ENCODE measurements at regions of chr3 and their contacts with region 1.

Region 1: DNA sequence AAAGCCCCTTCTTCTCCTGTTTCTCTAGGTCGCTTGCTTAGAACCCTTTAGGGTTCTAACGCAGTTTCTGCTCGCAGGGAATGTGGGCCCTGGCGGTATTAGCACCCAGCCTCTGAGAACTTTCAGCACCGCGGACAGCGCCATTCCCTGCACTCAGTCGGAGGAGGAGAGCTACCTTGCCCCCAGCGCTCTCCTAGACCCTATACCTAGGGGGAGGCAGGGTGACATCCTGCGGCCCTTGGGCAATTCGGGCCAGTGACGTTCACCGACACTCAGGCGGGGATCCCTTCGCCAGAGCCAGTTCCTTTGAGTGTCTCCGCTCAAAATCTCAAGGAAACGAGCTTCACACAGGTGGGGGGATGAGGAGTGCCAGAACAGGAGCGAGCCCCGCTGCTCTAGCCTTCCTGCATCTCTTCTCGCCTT is 1.3 kb downstream of the SLC7A14 start:
- DNase-seq: peak; percentile 42
- H3K4me3 ChIP-seq: peak overlapping the region; percentile 61 to 64
- H3K27ac ChIP-seq: no peak overlapping the region
- H3K4me1 ChIP-seq: peaks cover 0 to 11% of the 10 kb centered on the region in 2 experiments; a peak in 2 of 4 replicates
- H3K27me3 ChIP-seq: no peaks in the 10 kb centered on the region
- CTCF ChIP-seq: no peak
- EP300 ChIP-seq: no peak
- RAD21 ChIP-seq: no peak

Region 2: DNA sequence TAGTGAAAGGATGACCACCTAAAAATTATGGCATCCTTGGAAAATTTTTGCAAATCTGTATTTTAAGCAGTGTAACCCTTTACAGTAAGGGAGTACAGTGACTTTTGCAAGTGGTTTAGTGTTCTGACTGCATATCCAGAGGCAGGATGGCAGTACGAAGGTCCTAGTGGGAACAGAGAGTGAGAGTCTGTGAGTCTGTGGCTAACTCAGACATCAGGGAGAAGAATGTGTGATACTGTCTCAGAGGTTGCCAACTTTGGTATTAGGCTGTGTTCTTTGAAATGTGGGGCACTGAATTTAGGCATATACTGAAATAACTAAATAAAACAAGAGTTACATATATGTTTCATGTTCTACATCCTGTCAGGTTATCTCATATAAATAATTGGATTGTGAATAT is 336.7 kb before region 1 on chr3:
- CTCF ChIA-PET with region 1: no interaction called
- POLR2A ChIA-PET with region 1: no interaction called
- DNase-seq: no peak
- H3K4me3 ChIP-seq: no peak overlapping the region
- H3K27ac ChIP-seq: no peak overlapping the region
- H3K4me1 ChIP-seq: no peaks in the 10 kb centered on the region
- H3K27me3 ChIP-seq: no peaks in the 10 kb centered on the region
- CTCF ChIP-seq: no peak
- EP300 ChIP-seq: no peak
- RAD21 ChIP-seq: no peak

Region 3: GRCh38 chr3:170572665-170573253 is 11.8 kb before region 1 on chr3:
- CTCF ChIA-PET with region 1: interaction called, 10 read pairs
- POLR2A ChIA-PET with region 1: interaction called, 3 read pairs
- DNase-seq: no peak
- H3K4me3 ChIP-seq: no peak overlapping the region
- H3K27ac ChIP-seq: peak overlapping the region; percentile 11 to 65; a peak in 3 of 4 replicates
- H3K4me1 ChIP-seq: peaks cover 0 to 4% of the 10 kb centered on the region in 2 experiments; a peak in 2 of 4 replicates
- H3K27me3 ChIP-seq: no peaks in the 10 kb centered on the region
- CTCF ChIP-seq: no peak
- EP300 ChIP-seq: peak in 1 of 2 experiments; percentile 58; a peak in 2 of 4 replicates
- RAD21 ChIP-seq: no peak

Region 4: GRCh38 chr3:170622369-170623159 is 38.0 kb after region 1 on chr3:
- CTCF ChIA-PET with region 1: no interaction called
- POLR2A ChIA-PET with region 1: interaction called, 10 read pairs
- DNase-seq: peak; percentile 85
- H3K4me3 ChIP-seq: no peak overlapping the region
- H3K27ac ChIP-seq: peak overlapping the region; percentile 29 to 99; a peak in 2 of 4 replicates
- H3K4me1 ChIP-seq: peaks cover 7 to 24% of the 10 kb centered on the region in 2 experiments
- H3K27me3 ChIP-seq: no peaks in the 10 kb centered on the region
- CTCF ChIP-seq: 0 out of 2 replicates have a peak, but pooled peaks have one; percentile 13
- EP300 ChIP-seq: peak; percentile 69 to 95; a peak in 3 of 4 replicates
- RAD21 ChIP-seq: peak; percentile 46; the same call in 1 of the 2 replicates

Measured in SK-N-SH (cell line).